ENCODE measurements at regions of chr17 and their contacts with region 1.

Region 1: GRCh38 chr17:76103274-76104139 is at the start of gene EXOC7:
- DNase-seq: peak; percentile 92 to 96
- H3K4me3 ChIP-seq: peak within 1 kb of the TSS; percentile 82
- H3K4me3 Mint-ChIP-seq: peak within 1 kb of the TSS; percentile 92
- H3K27ac Mint-ChIP-seq: peak within 1 kb of the TSS; percentile 91
- H3K4me1 ChIP-seq: peaks cover 28% of the 10 kb centered on the region
- H3K4me1 Mint-ChIP-seq: peaks cover 9% of the 10 kb centered on the region
- H3K27me3 ChIP-seq: no peaks in the 10 kb centered on the region
- H3K27me3 Mint-ChIP-seq: no peaks in the 10 kb centered on the region
- CTCF ChIP-seq: no peak
- total RNA-seq, gene EXOC7: 205 TPM in 2 replicates

Region 2: DNA sequence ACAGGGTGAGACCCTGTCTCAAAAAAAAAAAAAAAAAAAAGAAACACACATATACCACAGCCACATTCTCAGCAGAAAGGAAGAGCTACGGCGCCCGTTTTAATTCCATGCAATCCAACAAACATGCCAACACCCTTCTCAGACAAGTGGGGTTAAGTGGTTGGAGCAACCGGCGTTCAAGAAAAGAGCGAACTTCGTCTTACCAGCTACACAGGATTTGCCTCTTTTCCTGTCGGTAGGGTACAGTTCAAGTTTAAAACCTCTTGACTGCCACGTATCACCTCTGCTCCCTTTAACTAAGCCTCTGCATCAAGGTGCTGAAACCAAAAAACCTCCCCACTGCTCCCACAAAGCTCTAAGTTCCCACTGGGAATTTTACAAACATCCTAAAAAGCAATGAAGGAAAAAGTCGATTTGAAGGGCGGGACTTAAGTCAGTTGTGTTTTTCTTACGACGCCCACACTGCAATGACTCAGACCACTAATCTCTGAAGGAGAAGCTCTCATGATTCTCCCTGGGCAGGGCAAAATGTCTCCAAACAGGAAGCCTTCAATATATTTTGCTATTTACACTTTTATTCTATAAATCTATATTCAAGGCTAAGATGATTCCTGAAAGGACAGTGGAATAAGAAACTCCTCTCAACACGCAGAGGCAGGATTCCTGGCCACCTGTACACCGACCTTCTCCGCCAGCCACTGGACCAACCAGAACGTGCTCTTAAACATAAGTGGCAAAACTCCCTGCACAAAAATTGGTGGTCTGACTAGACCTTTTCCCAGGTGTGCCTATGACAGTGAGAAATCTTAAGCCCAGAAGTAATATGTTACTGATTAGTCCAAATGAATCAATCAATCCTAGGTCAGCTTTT is 50.0 kb before region 1 on chr17:
- CTCF ChIA-PET with region 1: no interaction called
- POLR2A ChIA-PET with region 1: no interaction called
- intact Hi-C with region 1: no loop called
- DNase-seq: no peak
- H3K4me3 ChIP-seq: no peak overlapping the region
- H3K4me3 Mint-ChIP-seq: peak overlapping the region; percentile 13
- H3K27ac Mint-ChIP-seq: peak overlapping the region; percentile 81
- H3K4me1 ChIP-seq: peaks cover 15% of the 10 kb centered on the region
- H3K4me1 Mint-ChIP-seq: peaks cover 9% of the 10 kb centered on the region
- H3K27me3 ChIP-seq: no peaks in the 10 kb centered on the region
- H3K27me3 Mint-ChIP-seq: no peaks in the 10 kb centered on the region
- CTCF ChIP-seq: no peak

Region 3: GRCh38 chr17:76264755-76265596 is 161.5 kb after region 1 on chr17 and contains the start of gene UBALD2:
- CTCF ChIA-PET with region 1: no interaction called
- POLR2A ChIA-PET with region 1: interaction called, 3 read pairs
- intact Hi-C with region 1: loop called (anchors 10 kb)
- DNase-seq: peak; percentile 99 to 100
- H3K4me3 ChIP-seq: peak within 1 kb of the TSS; percentile 85
- H3K4me3 Mint-ChIP-seq: peak within 1 kb of the TSS; percentile 80
- H3K27ac Mint-ChIP-seq: peak within 1 kb of the TSS; percentile 89
- H3K4me1 ChIP-seq: peaks cover 65% of the 10 kb centered on the region
- H3K4me1 Mint-ChIP-seq: peaks cover 33% of the 10 kb centered on the region
- H3K27me3 ChIP-seq: no peaks in the 10 kb centered on the region
- H3K27me3 Mint-ChIP-seq: no peaks in the 10 kb centered on the region
- CTCF ChIP-seq: no peak
- total RNA-seq, gene UBALD2: 50.0 and 51.6 TPM in 2 replicates

Measured in Caco-2 (cell line).